ENCODE measurements at regions of chr16 and their contacts with region 1.

Region 1: GRCh38 chr16:22948603-22949368 is 134.8 kb downstream of the HS3ST2 start:
- DNase-seq: peak; percentile 31 to 59
- ATAC-seq: peak; percentile 88 to 93
- H3K4me3 ChIP-seq: peak overlapping the region in 2 of 4 donors; percentile 19 to 42
- H3K27ac ChIP-seq: no peak overlapping the region
- H3K4me1 ChIP-seq: peaks cover 7% of the 10 kb centered on the region in 2 donors
- H3K27me3 ChIP-seq: no peaks in the 10 kb centered on the region
- CTCF ChIP-seq: peak; percentile 60 to 73 (median 66)
- POLR2A ChIP-seq: no peak

Region 2: GRCh38 chr16:22063888-22064467 is 884.8 kb before region 1 on chr16:
- in situ Hi-C with region 1: no loop called
- intact Hi-C with region 1: no loop called
- DNase-seq: no peak
- ATAC-seq: no peak
- H3K4me3 ChIP-seq: no peak overlapping the region
- H3K27ac ChIP-seq: no peak overlapping the region
- H3K4me1 ChIP-seq: no peaks in the 10 kb centered on the region
- H3K27me3 ChIP-seq: no peaks in the 10 kb centered on the region
- CTCF ChIP-seq: no peak
- POLR2A ChIP-seq: no peak

Region 3: DNA sequence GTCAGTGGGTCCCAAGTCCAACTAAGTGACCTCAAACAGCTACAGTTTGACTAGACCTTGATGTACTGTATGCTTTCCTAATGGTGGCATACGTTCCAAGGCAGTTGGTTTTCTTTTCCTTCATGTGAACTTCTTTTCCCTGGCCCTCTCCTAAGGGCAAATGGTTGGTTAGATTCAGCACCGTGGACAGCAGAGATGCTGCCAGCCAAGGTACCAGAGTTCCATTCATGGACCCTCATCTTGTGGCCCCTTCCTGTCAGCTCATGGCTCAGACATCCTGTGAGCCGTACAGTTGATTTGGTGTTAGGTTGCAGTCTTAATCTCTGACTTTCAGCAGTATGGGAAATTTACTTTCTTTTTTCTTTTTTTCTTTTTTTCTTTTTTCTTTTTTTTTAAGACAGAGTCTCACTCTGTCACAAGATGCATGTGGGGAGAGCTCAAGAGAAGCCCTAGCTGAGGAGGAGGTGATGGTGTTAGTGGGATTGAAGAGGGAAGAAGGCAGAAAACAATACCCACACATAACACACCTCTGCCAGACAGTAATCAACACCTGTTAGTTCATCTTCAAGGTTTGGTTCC is 78.1 kb after region 1 on chr16:
- in situ Hi-C with region 1: loop called in 1 of 4 experiments (anchors 25 kb)
- intact Hi-C with region 1: no loop called
- DNase-seq: no peak
- ATAC-seq: no peak
- H3K4me3 ChIP-seq: no peak overlapping the region
- H3K27ac ChIP-seq: no peak overlapping the region
- H3K4me1 ChIP-seq: no peaks in the 10 kb centered on the region
- H3K27me3 ChIP-seq: no peaks in the 10 kb centered on the region
- CTCF ChIP-seq: no peak
- POLR2A ChIP-seq: no peak